H1 (cell line): ENCODE measurements at regions of chr6 and their contacts with region 1.

Region 1: DNA sequence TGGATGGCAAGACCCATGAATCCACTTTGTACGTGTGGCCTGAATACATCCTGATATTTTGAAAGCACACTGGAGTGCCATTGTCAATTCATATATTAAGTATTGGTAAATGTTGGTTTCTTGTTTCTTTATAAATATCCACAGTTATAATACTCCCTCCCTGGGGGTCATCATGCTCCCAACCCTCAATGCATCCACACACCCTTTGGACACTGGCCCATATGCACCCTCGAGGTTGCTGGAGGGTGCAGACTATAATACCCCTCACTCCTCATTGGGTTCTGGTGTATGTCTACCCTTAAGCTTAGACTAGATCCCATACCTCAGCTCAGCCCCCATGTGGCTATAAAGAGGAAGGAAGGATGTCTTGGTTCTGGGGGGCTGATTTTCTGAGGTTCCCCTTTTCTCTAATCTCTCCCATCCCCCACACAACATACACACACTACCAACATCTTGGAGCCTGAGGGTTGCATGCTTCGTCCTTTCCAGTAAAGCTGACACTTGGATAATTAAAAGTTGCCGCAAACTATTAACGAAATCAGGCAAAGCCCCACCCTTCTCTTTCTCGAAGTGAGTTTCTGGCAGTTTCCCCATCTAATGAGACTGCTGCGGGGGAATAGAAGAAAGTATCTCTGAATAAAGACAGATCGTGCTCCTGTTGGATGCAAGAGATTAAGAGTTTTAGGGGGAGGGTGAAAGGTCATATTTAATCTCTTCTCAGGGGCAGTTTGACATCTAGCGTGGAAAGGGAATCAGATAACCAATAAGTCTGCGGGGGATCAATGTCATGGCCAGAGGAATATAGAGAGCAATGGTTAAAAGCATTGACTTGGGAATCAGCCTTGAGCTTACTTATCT is 7.4 kb downstream of the PIM1 start:
- DNase-seq: no peak
- H3K4me3 ChIP-seq: no peak overlapping the region
- H3K27ac ChIP-seq: no peak overlapping the region
- H3K4me1 ChIP-seq: peaks cover 5 to 8% (median 6%) of the 10 kb centered on the region in 4 experiments; a peak in 5 of 7 replicates
- H3K27me3 ChIP-seq: no peaks in the 10 kb centered on the region
- CTCF ChIP-seq: no peak
- EP300 ChIP-seq: no peak
- POLR2A ChIP-seq: no peak
- RAD21 ChIP-seq: no peak

Region 2: GRCh38 chr6:36851149-36851614 is 326.1 kb before region 1 on chr6:
- CTCF ChIA-PET with region 1: no interaction called
- POLR2A ChIA-PET with region 1: no interaction called
- DNase-seq: peak in 1 of 2 experiments; percentile 71
- H3K4me3 ChIP-seq: no peak overlapping the region
- H3K27ac ChIP-seq: no peak overlapping the region
- H3K4me1 ChIP-seq: peaks cover 7 to 17% (median 9%) of the 10 kb centered on the region in 4 experiments
- H3K27me3 ChIP-seq: peaks cover 0 to 9% (median 0%) of the 10 kb centered on the region in 4 experiments; a peak in 2 of 7 replicates
- CTCF ChIP-seq: peak in 2 of 3 experiments; percentile 75 to 85; a peak in 3 of 4 replicates
- EP300 ChIP-seq: no peak
- POLR2A ChIP-seq: no peak
- RAD21 ChIP-seq: peak; percentile 81 to 89

Region 3: DNA sequence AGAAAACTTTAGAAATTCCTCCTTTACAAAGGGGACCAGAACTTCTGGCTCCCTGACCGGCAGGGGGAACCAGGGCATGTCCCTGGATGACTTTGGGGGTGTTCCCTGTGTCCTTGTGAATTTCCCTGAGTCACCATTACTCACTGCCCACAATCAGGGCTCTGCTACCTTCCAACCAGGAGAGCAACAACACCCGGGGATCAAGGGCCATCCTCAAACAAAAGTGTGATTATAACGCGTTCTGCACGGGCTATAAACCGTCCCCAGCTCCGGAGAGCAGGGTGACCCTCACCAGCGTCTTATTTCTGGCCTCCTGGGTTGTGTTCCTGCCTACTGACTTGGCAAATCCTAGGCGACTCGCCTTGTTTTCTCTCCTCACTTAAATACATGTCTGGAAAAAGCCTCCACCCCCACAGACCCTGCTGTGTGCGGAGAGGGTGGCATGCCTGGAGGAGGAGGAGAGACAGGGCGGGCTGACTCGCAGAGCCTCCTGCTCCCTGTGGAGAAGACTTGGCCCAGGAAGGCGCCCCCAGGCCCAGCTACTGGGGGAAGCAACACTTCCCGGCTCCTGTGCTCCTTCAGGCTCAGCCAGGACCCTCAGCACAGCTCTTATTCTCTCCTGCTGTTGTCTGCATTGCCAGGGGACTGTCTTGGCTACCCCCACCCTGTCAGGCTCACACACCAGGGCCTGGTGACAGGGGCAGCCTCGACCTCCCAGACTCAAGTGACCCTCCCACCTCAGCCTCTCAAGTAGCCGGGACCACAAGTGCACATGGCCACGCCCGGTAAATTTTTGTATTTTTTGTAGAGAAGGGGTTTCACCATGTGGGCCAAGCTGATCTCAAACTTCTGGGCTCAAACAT is 117.7 kb before region 1 on chr6:
- CTCF ChIA-PET with region 1: interaction called, 40 read pairs
- POLR2A ChIA-PET with region 1: interaction called, 82 read pairs
- DNase-seq: peak in 1 of 2 experiments; percentile 82
- H3K4me3 ChIP-seq: peak overlapping the region in 3 of 4 experiments; percentile 20 to 46 (median 24); a peak in 4 of 8 replicates
- H3K27ac ChIP-seq: peak overlapping the region; percentile 94
- H3K4me1 ChIP-seq: peaks cover 4 to 31% (median 22%) of the 10 kb centered on the region in 4 experiments
- H3K27me3 ChIP-seq: no peaks in the 10 kb centered on the region
- CTCF ChIP-seq: peak in 2 of 3 experiments; percentile 73 to 82; a peak in 3 of 4 replicates
- EP300 ChIP-seq: peak in 1 of 2 experiments; percentile 19; a peak in 1 of 3 replicates
- POLR2A ChIP-seq: peak in 1 of 2 experiments; percentile 78; a peak in 2 of 3 replicates
- RAD21 ChIP-seq: peak; percentile 82 to 83

Region 4: DNA sequence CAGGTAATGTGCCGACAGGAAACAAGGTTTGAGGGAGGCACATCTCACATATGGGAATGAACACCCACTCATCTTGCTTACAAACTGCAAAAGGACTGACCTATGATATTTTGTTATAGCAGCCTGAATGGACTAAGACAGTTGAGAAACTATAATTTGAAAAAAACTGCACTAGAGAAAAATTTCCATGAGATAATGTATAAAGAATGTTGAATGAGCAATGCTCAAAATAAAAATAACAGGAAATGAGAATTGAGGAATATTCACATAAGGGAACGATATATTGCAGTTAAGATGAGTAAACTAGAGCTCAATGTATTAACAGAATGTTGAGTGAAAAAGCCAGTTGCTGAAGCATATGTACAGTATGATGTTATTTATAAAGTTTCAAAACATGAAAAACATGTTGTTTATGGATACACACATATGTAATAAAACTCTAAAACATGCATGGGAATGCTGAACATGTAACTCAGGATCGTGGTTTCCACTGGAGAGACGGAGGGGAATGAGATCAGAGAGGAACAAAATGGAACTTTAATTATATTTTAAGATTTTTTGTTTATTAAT is 74.0 kb after region 1 on chr6:
- CTCF ChIA-PET with region 1: no interaction called
- POLR2A ChIA-PET with region 1: no interaction called
- DNase-seq: no peak
- H3K4me3 ChIP-seq: no peak overlapping the region
- H3K27ac ChIP-seq: no peak overlapping the region
- H3K4me1 ChIP-seq: peaks cover 0 to 3% (median 0%) of the 10 kb centered on the region in 4 experiments; a peak in 1 of 7 replicates
- H3K27me3 ChIP-seq: no peaks in the 10 kb centered on the region
- CTCF ChIP-seq: no peak
- EP300 ChIP-seq: no peak
- POLR2A ChIP-seq: no peak
- RAD21 ChIP-seq: no peak